ENCODE measurements at regions of chr3 and their contacts with region 1.

Region 1: GRCh38 chr3:138923531-138923994 is 23.4 kb downstream of the FOXL2 start:
- DNase-seq: peak; percentile 75 to 92 (median 87)
- ATAC-seq: peak; percentile 90 to 98 (median 94)
- H3K4me3 ChIP-seq: no peak overlapping the region
- H3K27ac ChIP-seq: no peak overlapping the region
- H3K4me1 ChIP-seq: no peaks in the 10 kb centered on the region
- H3K27me3 ChIP-seq: no peaks in the 10 kb centered on the region
- CTCF ChIP-seq: peak; percentile 83 to 95 (median 94)

Region 2: GRCh38 chr3:138417559-138417982 is 506.0 kb before region 1 on chr3:
- intact Hi-C with region 1: loop called in 2 of 3 experiments (anchors 5 to 10 kb)
- DNase-seq: peak; percentile 71 to 87 (median 82)
- ATAC-seq: peak; percentile 96 to 99 (median 98)
- H3K4me3 ChIP-seq: no peak overlapping the region
- H3K27ac ChIP-seq: no peak overlapping the region
- H3K4me1 ChIP-seq: no peaks in the 10 kb centered on the region
- H3K27me3 ChIP-seq: peaks cover 0 to 3% (median 0%) of the 10 kb centered on the region in 4 donors
- CTCF ChIP-seq: peak; percentile 86 to 97 (median 94)

Region 3: DNA sequence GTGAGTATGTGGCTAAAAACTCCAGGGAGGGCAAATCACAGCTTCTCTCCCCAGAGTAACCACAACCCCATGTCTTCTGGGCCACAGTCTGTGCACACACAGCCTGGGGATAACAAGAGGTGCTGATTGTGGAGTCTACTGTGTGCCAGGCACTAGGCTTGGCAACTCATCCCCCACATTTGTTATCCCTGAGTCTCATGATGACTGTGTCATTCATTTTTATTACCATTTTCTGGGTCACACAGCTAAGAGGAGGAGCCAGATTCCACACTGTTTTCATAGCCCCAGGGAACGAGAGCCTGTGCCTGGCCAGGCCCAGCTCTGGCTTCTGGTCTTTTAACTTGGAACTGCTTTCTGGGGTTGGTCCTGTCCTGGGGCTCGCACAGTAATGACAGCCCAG is 454.7 kb before region 1 on chr3:
- intact Hi-C with region 1: loop called in 1 of 3 experiments (anchors 10 kb)
- DNase-seq: no peak
- ATAC-seq: no peak
- H3K4me3 ChIP-seq: no peak overlapping the region
- H3K27ac ChIP-seq: no peak overlapping the region
- H3K4me1 ChIP-seq: no peaks in the 10 kb centered on the region
- H3K27me3 ChIP-seq: no peaks in the 10 kb centered on the region
- CTCF ChIP-seq: no peak

Region 4: DNA sequence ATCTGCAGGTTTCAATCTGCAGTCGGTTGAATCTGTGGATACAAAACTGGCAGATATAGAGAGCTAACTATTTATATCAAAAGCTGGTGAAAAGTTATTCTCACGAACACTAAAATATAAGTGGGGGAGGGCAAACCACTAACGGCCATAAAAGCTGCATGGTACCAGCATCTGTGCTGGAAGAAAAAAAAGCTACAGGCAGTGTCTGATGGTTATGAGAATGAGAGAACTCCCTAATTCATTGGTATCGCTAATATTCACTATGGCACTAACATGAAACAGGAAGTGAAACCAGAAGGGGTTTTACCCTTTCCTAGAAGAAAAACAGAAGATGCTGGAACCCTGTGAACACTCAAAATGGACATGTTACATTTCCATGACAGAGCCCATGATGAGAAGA is 345.4 kb before region 1 on chr3:
- intact Hi-C with region 1: loop called in 1 of 3 experiments (anchors 10 kb)
- DNase-seq: no peak
- ATAC-seq: peak in 1 of 4 donors; percentile 23
- H3K4me3 ChIP-seq: no peak overlapping the region
- H3K27ac ChIP-seq: no peak overlapping the region
- H3K4me1 ChIP-seq: peaks cover 0 to 2% (median 0%) of the 10 kb centered on the region in 3 donors
- H3K27me3 ChIP-seq: no peaks in the 10 kb centered on the region
- CTCF ChIP-seq: no peak

Measured in pancreas (tissue), 10 donors.